HAP-1 (cell line): ENCODE measurements at regions of chr22 and their contacts with region 1.

Region 1: GRCh38 chr22:17655289-17655688 is 16.7 kb downstream of the BCL2L13 start:
- DNase-seq: no peak
- H3K4me3 ChIP-seq: no peak overlapping the region
- H3K4me1 ChIP-seq: no peaks in the 10 kb centered on the region
- H3K27me3 ChIP-seq: no peaks in the 10 kb centered on the region

Region 2: DNA sequence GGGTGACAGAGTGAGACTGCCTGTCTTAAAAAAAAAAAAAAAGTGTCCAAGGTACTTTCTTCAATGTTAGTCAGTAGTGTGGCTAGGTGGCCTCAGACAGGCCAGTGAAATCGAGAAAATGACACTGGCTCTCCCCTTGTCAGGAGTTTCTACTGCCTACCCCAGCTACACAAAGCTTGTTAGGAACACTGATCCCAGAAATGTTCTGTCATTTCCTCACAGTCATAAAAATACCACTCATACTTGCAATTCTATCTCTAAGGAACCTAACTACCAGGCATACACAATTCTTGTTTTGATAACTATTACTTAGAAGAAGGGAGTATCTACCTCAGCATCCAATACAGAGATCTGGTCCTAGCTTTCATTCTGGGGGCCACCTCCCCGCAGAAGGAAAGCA is 58.1 kb before region 1 on chr22:
- in situ Hi-C with region 1: loop called (anchors 10 kb)
- DNase-seq: no peak
- H3K4me3 ChIP-seq: no peak overlapping the region
- H3K4me1 ChIP-seq: no peaks in the 10 kb centered on the region
- H3K27me3 ChIP-seq: no peaks in the 10 kb centered on the region

Region 3: GRCh38 chr22:17712441-17712840 is 57.2 kb after region 1 on chr22:
- in situ Hi-C with region 1: loop called (anchors 10 kb)
- DNase-seq: no peak
- H3K4me3 ChIP-seq: no peak overlapping the region
- H3K4me1 ChIP-seq: no peaks in the 10 kb centered on the region
- H3K27me3 ChIP-seq: no peaks in the 10 kb centered on the region